GM10248 (cell line): ENCODE measurements at regions of chr19 and their contacts with region 1.

Region 1: GRCh38 chr19:9413240-9413954 is 22.0 kb downstream of the ZNF266 start:
- DNase-seq: no peak
- CTCF ChIP-seq: no peak

Region 2: GRCh38 chr19:8240274-8241229 is 1172.8 kb before region 1 on chr19:
- CTCF ChIA-PET with region 1: no interaction called
- POLR2A ChIA-PET with region 1: interaction called, 16 read pairs
- DNase-seq: peak; percentile 92
- CTCF ChIP-seq: no peak

Region 3: GRCh38 chr19:9381367-9381785 is 32.0 kb before region 1 on chr19:
- CTCF ChIA-PET with region 1: no interaction called
- POLR2A ChIA-PET with region 1: no interaction called
- DNase-seq: no peak
- CTCF ChIP-seq: no peak

Region 4: GRCh38 chr19:9435279-9436268 is 22.2 kb after region 1 on chr19 and contains the start of gene ZNF266:
- CTCF ChIA-PET with region 1: no interaction called
- POLR2A ChIA-PET with region 1: no interaction called
- DNase-seq: peak; percentile 96
- CTCF ChIP-seq: peak; percentile 38

Region 5: DNA sequence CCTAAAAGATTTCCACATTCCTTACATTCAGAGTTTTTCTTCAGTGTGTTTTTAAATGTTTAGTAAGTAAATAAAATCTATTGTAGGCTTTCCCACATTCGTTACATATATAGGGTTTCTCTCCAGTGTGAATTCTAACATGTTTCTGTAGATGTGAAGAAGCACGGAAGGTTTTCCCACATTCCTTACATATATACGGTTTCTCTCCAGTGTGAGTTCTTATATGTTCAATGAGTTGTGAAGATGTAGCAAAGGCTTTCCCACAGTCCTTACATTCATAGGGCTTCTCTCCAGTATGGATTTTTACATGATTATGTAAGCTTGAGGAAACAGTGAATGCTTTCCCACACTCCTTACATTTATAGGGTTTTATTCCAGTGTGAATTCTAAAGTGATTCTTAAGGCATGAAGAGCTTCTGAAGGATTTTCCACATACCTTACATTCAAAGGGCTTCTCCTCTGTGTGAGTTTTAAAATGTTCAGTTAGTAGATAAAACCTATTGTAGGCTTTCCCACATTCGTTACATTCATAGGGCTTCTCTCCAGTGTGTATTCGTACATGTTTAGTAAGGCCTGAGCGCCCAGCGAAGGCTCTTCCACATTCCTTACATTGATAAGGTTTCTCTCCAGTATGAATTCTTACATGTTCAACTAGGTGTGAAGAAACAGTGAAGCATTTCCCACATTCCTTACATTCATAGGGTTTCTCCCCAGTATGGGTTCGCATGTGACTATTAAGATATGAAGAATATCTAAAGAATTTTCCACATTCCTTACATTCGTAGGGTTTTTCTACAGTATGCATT is 152.7 kb after region 1 on chr19:
- CTCF ChIA-PET with region 1: no interaction called
- POLR2A ChIA-PET with region 1: no interaction called
- DNase-seq: no peak
- CTCF ChIP-seq: no peak